ENCODE measurements at regions of chr17 and their contacts with region 1.

Region 1: GRCh38 chr17:5419959-5420653 is at the start of gene RPAIN:
- DNase-seq: peak; percentile 87
- CTCF ChIP-seq: no peak

Region 2: DNA sequence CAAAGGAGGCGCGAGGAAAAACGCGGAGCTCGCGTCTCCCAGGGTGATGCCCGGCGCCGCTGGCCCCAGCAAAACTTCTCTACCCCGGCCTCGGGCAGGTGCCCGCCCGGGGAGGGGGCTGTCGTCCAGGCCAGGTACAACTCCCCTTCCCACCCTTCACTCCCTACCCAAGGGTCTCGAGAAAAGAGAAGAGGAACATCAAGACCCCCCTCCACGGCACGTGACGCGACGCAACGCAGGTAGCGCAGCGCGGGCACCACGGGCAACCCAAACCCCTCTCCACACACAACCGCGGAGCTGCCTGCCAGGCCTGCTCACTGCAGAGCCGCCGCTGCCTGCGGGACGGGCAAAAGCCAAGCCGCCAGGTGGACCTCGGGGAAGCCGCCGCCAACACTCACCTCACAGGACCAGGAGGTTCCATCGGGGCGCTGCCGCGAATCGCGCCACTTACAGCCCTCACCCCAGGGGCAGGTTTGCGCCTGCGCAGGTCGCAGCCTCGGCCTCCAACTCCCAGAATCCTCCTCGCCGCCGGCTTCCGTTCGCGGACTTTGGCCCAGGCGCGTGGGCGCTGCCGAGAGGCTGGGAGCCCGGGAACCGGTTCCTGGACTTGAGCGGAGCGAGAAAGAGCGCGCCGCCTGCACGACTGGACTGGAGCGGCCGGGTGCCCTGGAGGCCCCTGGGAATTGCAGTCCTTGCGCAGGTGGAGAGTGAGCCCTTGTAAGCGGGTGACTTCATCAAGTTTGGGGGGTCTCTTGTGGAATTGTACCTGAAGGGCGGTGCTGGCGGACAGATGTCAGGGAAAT is 308.5 kb before region 1 on chr17 and contains the start of gene ZNF232:
- in situ Hi-C with region 1: no loop called
- DNase-seq: peak; percentile 97
- CTCF ChIP-seq: no peak

Region 3: GRCh38 chr17:5364156-5364555 is 56.0 kb before region 1 on chr17:
- in situ Hi-C with region 1: loop called (anchors 10 kb)
- DNase-seq: no peak
- CTCF ChIP-seq: no peak

Measured in GM13976 (cell line).